Activated T-helper 2 cell treated with anti-CD3 and anti-CD28 coated beads, Interferon-gamma antibody, Interleukin-2, Interleukin-4, amounts not matched to agents 10 μg/mL and 5 μg/mL and 100 μg/mL, durations not matched to agents 14 hours and 24 hours and 36 hours (primary cell): ENCODE measurements at regions of chr1 and their contacts with region 1.

Region 1: GRCh38 chr1:36369061-36369861 is 16.5 kb downstream of the STK40 start:
- DNase-seq: peak; percentile 73
- H3K4me3 Mint-ChIP-seq: no peak overlapping the region
- H3K27ac Mint-ChIP-seq: no peak overlapping the region
- H3K4me1 Mint-ChIP-seq: peaks cover 50% of the 10 kb centered on the region
- H3K27me3 Mint-ChIP-seq: no peaks in the 10 kb centered on the region

Region 2: DNA sequence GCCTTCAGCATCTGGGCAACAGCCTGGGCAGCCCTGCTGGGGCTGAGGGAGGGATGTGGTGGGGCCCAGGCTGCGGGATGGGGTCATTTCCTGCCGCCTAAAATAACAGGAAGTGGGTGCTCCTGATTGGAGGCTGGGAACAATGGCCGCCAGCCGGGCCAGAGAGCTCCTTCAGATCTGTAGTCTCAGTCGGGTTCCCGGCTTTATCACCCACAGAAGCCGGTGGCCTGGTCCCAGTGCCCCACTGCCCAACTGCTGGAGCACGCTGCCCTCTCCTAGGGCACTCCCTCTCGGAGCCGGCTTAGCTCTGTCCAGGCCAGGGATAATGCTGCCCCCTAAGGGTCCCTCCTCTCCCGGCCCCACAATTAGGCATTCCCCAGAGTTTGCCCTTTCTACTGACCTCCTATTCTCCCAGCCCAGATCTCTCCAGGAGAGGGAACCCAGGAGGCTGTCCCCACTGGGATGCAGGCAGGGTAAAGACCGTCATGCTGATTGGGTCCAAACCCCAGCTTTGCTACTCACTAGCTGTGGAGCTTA is 208.2 kb before region 1 on chr1:
- intact Hi-C with region 1: no loop called
- DNase-seq: peak; percentile 68
- H3K4me3 Mint-ChIP-seq: peak overlapping the region; percentile 77
- H3K27ac Mint-ChIP-seq: peak overlapping the region; percentile 93
- H3K4me1 Mint-ChIP-seq: peaks cover 59% of the 10 kb centered on the region
- H3K27me3 Mint-ChIP-seq: no peaks in the 10 kb centered on the region

Region 3: GRCh38 chr1:36306902-36307456 is 62.3 kb before region 1 on chr1:
- intact Hi-C with region 1: loop called (anchors 1 kb)
- DNase-seq: peak; percentile 93
- H3K4me3 Mint-ChIP-seq: peak overlapping the region; percentile 99
- H3K27ac Mint-ChIP-seq: peak overlapping the region; percentile 95
- H3K4me1 Mint-ChIP-seq: peaks cover 37% of the 10 kb centered on the region
- H3K27me3 Mint-ChIP-seq: no peaks in the 10 kb centered on the region

Region 4: DNA sequence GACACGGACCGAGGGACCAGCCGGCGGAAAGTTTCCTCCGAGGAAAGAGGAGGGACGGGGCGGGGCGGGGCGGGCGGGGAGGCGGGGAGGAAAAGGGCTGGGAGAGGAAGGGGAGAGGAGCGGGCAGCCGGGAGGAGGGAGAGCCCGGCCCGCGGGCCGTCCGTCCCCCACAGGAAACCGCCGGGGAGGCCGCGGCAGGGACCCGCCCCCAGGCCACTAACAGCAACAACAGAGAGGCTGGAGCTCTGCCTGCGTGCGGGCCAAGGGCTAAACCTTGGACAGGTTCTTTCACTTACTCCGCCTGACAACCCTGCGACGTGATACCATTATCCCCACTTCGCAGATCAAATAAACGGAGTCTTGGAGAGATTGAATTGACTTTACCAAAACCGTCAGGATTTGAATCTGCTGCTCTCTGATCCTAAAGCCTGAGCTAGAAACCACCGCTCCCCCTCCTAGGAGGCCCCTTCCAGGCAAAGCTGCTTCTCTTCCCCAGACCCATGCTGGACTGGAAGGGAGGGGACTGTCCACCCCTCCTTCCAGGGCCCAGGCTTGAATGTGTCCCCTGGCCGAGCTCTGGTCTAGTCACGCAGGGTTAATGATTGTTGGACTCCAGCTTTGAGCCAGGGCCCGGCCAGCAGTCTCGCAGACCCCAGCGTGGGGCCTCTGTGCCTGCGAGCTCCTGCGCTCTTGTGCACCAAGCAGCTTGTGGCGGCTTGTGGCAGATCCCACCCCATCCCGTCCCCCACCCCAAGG is 45.5 kb before region 1 on chr1 and contains the start of gene EVA1B:
- intact Hi-C with region 1: loop called (anchors 5 kb)
- DNase-seq: peak; percentile 57
- H3K4me3 Mint-ChIP-seq: peak within 1 kb of the TSS; percentile 75
- H3K27ac Mint-ChIP-seq: peak within 1 kb of the TSS; percentile 55
- H3K4me1 Mint-ChIP-seq: peaks cover 22% of the 10 kb centered on the region
- H3K27me3 Mint-ChIP-seq: no peaks in the 10 kb centered on the region
- total RNA-seq, gene EVA1B: 10.7 and 11.0 TPM in 2 replicates

Region 5: GRCh38 chr1:36342481-36343478 is 26.5 kb before region 1 on chr1:
- intact Hi-C with region 1: loop called (anchors 1 kb)
- DNase-seq: no peak
- H3K4me3 Mint-ChIP-seq: no peak overlapping the region
- H3K27ac Mint-ChIP-seq: no peak overlapping the region
- H3K4me1 Mint-ChIP-seq: peaks cover 5% of the 10 kb centered on the region
- H3K27me3 Mint-ChIP-seq: no peaks in the 10 kb centered on the region

Region 6: DNA sequence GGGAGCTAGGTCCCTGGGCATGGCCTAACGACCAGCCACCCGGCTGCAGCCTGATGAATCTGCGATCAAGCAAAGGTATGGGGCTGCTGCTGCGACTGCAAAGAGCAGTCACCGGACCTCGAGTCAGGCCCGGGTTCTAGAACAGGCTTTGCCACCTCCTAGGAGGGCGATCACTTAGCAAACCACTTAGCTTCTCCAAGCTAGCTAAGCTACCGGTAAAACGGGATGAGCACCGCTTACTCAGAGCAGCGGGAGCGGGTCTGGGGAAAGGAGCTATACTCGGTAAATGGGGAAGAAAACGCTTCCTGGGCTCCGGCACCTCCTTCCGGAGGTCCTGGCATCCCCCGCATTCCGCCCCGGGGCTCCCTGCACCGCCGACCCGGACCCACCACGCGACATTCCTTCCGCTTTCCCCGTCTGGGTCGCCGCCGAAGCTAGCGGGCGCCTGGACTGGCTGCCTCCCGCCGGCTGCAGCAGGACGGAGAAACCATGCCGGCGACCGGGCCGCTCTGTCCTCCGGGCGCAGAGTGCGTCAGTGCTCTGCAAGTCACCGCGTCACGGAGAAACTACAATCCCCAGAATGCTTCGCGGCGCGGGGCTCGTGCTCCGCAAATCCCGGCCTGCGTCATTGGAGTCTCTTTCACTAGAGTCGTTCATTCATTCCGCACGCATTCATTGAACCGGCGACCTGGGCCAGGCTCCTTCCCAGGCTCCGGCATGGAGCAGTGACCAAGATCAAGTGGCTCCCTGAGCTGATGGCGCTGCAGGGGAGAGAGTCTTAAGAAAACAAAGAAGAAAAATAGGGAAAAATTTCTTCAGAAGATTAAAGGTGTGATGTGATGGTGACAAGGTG is 28.3 kb after region 1 on chr1 and contains the start of gene LSM10:
- intact Hi-C with region 1: no loop called
- DNase-seq: peak; percentile 86
- H3K4me3 Mint-ChIP-seq: peak within 1 kb of the TSS; percentile 99
- H3K27ac Mint-ChIP-seq: peak within 1 kb of the TSS; percentile 100
- H3K4me1 Mint-ChIP-seq: peaks cover 19% of the 10 kb centered on the region
- H3K27me3 Mint-ChIP-seq: no peaks in the 10 kb centered on the region
- total RNA-seq, gene LSM10: 48.4 and 55.3 TPM in 2 replicates